SK-N-SH (cell line): ENCODE measurements at regions of chr6 and their contacts with region 1.

Region 1: GRCh38 chr6:26122793-26123674 is 35.8 kb downstream of the HFE start:
- DNase-seq: peak; percentile 76
- H3K4me3 ChIP-seq: peak overlapping the region; percentile 84 to 94
- H3K27ac ChIP-seq: peak overlapping the region; percentile 92 to 100
- H3K4me1 ChIP-seq: peaks cover 7% of the 10 kb centered on the region in 2 experiments; a peak in 3 of 4 replicates
- H3K27me3 ChIP-seq: no peaks in the 10 kb centered on the region
- CTCF ChIP-seq: no peak
- EP300 ChIP-seq: peak; percentile 93 to 98
- RAD21 ChIP-seq: no peak

Region 2: DNA sequence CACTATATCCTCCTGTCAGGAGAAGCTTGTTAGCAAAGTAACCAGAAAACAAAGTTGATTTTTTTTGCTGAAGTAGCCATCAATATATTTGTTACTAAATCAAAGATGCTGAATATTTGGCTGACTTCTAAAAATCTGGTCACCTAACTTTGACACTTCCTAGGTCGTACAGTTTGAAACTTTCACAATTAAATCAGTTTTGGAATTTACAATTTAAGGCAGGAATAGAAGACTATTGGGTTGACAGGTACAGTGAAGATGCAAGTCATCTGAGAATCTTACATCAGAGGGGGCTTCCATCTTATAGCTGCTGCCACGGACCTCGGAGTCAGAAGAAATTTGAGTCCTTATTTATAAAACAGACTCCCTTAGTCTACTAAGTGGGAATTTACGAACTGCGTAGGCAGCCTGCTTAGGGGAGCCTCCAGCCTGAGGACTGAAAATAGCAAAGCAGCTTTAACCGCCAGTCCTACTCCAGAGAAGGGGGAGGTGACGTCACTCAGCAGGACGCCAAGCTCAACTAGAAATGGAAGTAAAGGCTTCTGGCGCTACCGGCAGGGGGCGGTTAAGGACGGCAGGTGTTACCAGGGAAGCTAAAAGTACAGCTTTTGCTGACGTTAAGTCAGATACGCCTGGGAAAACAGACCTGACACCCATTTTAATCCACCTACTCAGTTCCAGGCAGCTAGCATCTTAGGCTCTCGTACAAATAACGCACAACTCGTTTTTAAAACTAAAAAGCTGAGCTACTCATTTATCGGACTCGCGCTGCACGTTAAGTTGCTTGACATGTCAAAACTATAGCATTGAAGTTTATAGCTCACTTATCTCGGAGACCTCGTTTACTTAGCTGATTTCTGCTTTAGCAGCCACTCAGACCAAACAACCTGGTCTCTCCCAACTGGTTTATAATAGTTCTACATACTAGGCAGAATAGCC is 96.9 kb before region 1 on chr6:
- CTCF ChIA-PET with region 1: no interaction called
- POLR2A ChIA-PET with region 1: interaction called, 38 read pairs
- DNase-seq: peak; percentile 59
- H3K4me3 ChIP-seq: peak overlapping the region; percentile 70 to 89
- H3K27ac ChIP-seq: peak overlapping the region; percentile 92 to 99
- H3K4me1 ChIP-seq: peaks cover 15 to 34% of the 10 kb centered on the region in 2 experiments; a peak in 3 of 4 replicates
- H3K27me3 ChIP-seq: no peaks in the 10 kb centered on the region
- CTCF ChIP-seq: peak; percentile 91
- EP300 ChIP-seq: peak in 1 of 2 experiments; percentile 22; a peak in 1 of 4 replicates
- RAD21 ChIP-seq: peak; percentile 24; the same call in 1 of the 2 replicates

Region 3: GRCh38 chr6:26054857-26055669 is 68.0 kb before region 1 on chr6:
- CTCF ChIA-PET with region 1: no interaction called
- POLR2A ChIA-PET with region 1: interaction called, 17 read pairs
- DNase-seq: peak; percentile 57
- H3K4me3 ChIP-seq: peak overlapping the region; percentile 79 to 80
- H3K27ac ChIP-seq: peak overlapping the region; percentile 97 to 98
- H3K4me1 ChIP-seq: peaks cover 0 to 7% of the 10 kb centered on the region in 2 experiments; a peak in 3 of 4 replicates
- H3K27me3 ChIP-seq: no peaks in the 10 kb centered on the region
- CTCF ChIP-seq: no peak
- EP300 ChIP-seq: no peak; a peak in 1 of 4 replicates
- RAD21 ChIP-seq: no peak

Region 4: DNA sequence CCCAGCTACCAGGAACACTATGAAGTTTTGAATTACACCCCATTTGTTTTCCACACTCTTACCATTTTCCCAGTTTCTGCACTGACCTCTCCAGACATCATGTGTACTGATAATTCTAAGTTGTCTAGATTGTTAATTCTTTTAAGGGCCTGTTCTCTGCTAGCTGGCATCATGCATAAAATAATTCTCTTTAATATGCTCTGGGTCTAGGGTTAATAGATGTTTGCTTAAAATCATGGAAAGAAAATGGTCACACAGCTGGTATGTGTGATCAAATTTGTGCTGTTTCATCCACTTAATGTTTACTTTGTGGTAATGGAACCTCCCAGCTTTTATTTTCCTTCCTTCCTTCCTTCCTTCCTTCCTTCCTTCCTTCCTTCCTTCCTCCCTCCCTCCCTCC is 13.3 kb after region 1 on chr6:
- CTCF ChIA-PET with region 1: interaction called, 4 read pairs
- POLR2A ChIA-PET with region 1: interaction called, 19 read pairs
- DNase-seq: no peak
- H3K4me3 ChIP-seq: no peak overlapping the region
- H3K27ac ChIP-seq: no peak overlapping the region
- H3K4me1 ChIP-seq: peaks cover 0 to 5% of the 10 kb centered on the region in 2 experiments; a peak in 2 of 4 replicates
- H3K27me3 ChIP-seq: no peaks in the 10 kb centered on the region
- CTCF ChIP-seq: no peak
- EP300 ChIP-seq: no peak
- RAD21 ChIP-seq: no peak

Region 5: DNA sequence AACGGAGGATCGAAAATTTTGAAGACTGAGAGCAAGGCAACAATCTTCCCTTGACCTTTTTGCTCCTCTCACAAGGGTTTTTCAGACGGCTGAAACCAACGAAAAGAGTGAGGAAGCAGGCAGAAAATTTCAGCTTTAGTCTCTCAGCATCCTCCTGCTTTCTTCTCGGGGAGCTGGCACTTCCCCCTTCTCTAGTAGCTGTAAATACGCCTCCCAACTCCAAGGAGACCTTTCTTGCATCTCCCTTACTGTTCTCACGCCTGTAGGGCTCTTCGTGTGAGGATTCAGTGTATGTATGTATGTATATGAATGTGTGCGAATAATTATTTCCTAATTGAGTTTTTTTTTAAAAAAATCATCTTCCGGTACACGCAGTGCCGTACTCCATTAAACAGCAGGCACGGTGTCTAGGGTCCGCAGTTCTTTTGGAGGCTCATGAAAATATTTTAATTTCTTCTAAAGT is 49.5 kb after region 1 on chr6:
- CTCF ChIA-PET with region 1: no interaction called
- POLR2A ChIA-PET with region 1: interaction called, 36 read pairs
- DNase-seq: peak; percentile 39
- H3K4me3 ChIP-seq: peak overlapping the region; percentile 60 to 86
- H3K27ac ChIP-seq: peak overlapping the region; percentile 96 to 97
- H3K4me1 ChIP-seq: peaks cover 3 to 12% of the 10 kb centered on the region in 2 experiments; a peak in 3 of 4 replicates
- H3K27me3 ChIP-seq: no peaks in the 10 kb centered on the region
- CTCF ChIP-seq: no peak
- EP300 ChIP-seq: no peak
- RAD21 ChIP-seq: no peak

Region 6: DNA sequence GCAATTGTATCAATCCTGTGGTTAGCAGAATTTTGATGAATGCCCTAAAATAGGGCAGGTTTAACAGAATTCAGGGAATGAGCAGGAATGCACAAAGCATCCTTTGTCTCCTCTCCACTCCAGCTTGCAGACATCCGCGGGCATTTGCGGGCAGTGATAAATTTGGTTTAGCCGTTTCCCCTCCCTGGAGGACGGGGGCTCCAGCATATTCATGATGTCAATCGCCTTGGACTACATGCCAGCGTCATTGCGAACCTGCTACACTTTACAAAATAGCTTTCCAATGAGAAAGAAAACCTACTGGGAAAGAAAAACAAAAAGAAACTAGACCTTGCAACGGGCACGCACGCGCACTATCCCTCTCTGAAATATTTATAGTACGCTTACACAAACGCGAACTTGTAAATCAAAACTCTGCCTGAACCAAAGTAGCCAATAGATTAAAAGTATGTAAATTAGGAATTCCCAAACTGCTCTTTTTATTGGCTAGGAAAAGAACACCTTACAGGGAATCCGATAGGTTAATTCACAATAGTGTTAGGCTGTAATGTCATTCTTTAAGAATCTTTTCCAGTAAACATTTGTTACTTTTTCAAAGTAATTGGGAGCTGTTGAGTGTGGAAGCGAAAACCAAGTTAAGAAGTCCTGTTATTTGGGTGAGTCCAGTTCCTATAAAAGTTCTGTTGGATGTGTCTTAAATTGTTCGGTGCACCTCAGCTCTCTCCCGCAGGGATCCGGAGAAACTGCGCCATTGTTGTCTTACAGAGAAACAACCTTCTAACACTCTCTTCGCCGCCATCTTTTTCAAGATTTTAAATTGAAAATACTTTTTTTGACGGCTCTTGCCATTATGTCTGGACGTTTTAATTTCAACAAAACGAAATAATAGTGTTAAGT is 100.9 kb after region 1 on chr6:
- CTCF ChIA-PET with region 1: no interaction called
- POLR2A ChIA-PET with region 1: interaction called, 10 read pairs
- DNase-seq: peak; percentile 36
- H3K4me3 ChIP-seq: peak overlapping the region; percentile 72 to 80
- H3K27ac ChIP-seq: peak overlapping the region; percentile 99 to 100
- H3K4me1 ChIP-seq: peaks cover 8 to 18% of the 10 kb centered on the region in 2 experiments; a peak in 3 of 4 replicates
- H3K27me3 ChIP-seq: no peaks in the 10 kb centered on the region
- CTCF ChIP-seq: no peak; the same call in 1 of the 2 replicates
- EP300 ChIP-seq: 0 out of 4 replicates have a peak, but pooled peaks of 1 of the 2 experiments have one; percentile 3
- RAD21 ChIP-seq: no peak

Region 7: DNA sequence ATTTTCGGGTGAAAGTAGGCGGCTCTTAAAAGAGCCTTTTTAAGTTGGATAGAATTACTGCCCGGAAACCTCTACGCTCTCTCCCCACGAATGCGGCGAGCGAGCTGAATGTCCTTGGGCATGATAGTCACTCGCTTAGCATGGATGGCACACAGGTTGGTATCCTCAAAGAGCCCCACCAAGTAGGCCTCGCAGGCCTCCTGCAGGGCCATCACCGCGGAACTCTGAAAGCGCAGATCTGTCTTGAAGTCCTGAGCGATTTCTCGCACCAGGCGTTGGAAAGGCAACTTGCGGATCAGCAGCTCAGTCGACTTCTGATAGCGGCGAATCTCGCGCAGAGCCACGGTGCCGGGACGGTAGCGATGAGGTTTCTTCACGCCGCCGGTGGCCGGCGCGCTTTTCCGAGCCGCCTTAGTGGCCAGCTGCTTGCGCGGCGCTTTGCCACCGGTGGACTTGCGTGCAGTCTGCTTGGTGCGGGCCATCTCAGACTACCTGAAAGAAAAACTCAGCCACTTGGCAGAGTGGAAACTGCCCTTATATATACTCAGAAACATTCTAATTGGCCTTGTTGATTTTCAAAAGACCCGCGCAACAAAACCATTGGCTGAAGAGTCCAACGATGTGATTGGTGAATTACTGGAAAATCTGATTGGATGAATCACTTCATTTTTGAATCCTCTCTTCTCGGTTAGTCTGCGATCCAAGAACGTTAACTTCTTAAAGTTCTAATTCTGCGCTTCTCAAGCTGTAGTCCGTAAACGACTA is 148.1 kb after region 1 on chr6:
- CTCF ChIA-PET with region 1: no interaction called
- POLR2A ChIA-PET with region 1: interaction called, 16 read pairs
- DNase-seq: peak; percentile 87
- H3K4me3 ChIP-seq: peak overlapping the region; percentile 66 to 75
- H3K27ac ChIP-seq: peak overlapping the region; percentile 84 to 99
- H3K4me1 ChIP-seq: peaks cover 0 to 14% of the 10 kb centered on the region in 2 experiments; a peak in 2 of 4 replicates
- H3K27me3 ChIP-seq: no peaks in the 10 kb centered on the region
- CTCF ChIP-seq: no peak
- EP300 ChIP-seq: peak in 1 of 2 experiments; percentile 40; a peak in 1 of 4 replicates
- RAD21 ChIP-seq: no peak